Natural killer cell (primary cell): ENCODE measurements at regions of chr3 and their contacts with region 1.

Region 1: GRCh38 chr3:101849721-101850245 is 469 bp downstream of the NFKBIZ start:
- DNase-seq: peak; percentile 49 to 74
- ATAC-seq: peak; percentile 17 to 23 (median 19)
- H3K4me3 ChIP-seq: peak overlapping the region; percentile 82
- H3K4me3 Mint-ChIP-seq: peak overlapping the region; percentile 94
- H3K27ac ChIP-seq: peak overlapping the region; percentile 82
- H3K27ac Mint-ChIP-seq: peak overlapping the region; percentile 98 to 99
- H3K4me1 ChIP-seq: peaks cover 9% of the 10 kb centered on the region
- H3K4me1 Mint-ChIP-seq: peaks cover 38 to 45% of the 10 kb centered on the region in 2 donors
- H3K27me3 ChIP-seq: no peaks in the 10 kb centered on the region
- H3K27me3 Mint-ChIP-seq: no peaks in the 10 kb centered on the region
- CTCF ChIP-seq: no peak

Region 2: DNA sequence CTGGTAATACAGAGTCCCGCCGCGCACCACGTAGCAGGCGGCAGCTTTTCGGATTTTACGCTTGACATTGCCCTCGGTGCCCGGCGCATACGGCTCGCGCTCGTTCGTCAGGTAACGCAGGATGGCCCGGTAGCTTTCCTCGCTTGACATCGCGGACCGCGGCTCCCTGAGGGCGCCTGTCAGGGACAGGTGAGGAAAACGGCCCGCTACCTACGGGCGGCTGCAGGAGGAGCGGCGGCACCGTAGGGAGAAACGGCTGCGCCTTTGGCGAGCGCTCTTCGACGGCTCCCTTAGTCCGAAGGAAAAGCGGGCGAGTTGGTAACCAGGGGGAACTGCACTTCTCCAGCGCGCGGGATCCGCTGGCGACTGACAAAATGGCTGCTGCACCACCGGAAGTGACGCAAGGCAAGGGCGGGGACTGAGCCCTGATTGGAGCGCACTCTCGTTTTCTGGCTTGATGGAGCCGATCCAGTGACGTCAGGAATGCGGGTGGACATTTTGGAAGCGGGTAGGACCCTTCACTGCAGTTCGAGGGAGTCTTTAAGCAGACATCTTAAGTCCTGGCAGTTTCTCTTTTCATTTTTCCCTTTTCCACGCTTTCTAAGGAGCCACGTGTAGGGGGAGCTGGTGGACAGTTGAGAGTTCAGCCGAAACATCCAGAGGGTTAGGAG is 172.9 kb before region 1 on chr3 and contains the start of gene ZBTB11:
- intact Hi-C with region 1: loop called (anchors 5 kb)
- DNase-seq: peak; percentile 100
- ATAC-seq: peak; percentile 67 to 81 (median 71)
- H3K4me3 ChIP-seq: peak within 1 kb of the TSS; percentile 92
- H3K4me3 Mint-ChIP-seq: peak within 1 kb of the TSS; percentile 97
- H3K27ac ChIP-seq: peak within 1 kb of the TSS; percentile 98
- H3K27ac Mint-ChIP-seq: peak within 1 kb of the TSS; percentile 96 to 98
- H3K4me1 ChIP-seq: peaks cover 20% of the 10 kb centered on the region
- H3K4me1 Mint-ChIP-seq: peaks cover 45 to 52% of the 10 kb centered on the region in 2 donors
- H3K27me3 ChIP-seq: no peaks in the 10 kb centered on the region
- H3K27me3 Mint-ChIP-seq: no peaks in the 10 kb centered on the region
- CTCF ChIP-seq: no peak
- total RNA-seq, gene ZBTB11: 72.0 to 90.9 (median 83.5) TPM

Region 3: GRCh38 chr3:101724329-101725193 is 125.2 kb before region 1 on chr3 and contains the start of gene CEP97:
- intact Hi-C with region 1: loop called (anchors 1 kb)
- DNase-seq: peak; percentile 79 to 91
- ATAC-seq: peak; percentile 96 to 100 (median 97)
- H3K4me3 ChIP-seq: peak within 1 kb of the TSS; percentile 82
- H3K4me3 Mint-ChIP-seq: peak within 1 kb of the TSS; percentile 98
- H3K27ac ChIP-seq: peak within 1 kb of the TSS; percentile 54
- H3K27ac Mint-ChIP-seq: peak within 1 kb of the TSS; percentile 90 to 95
- H3K4me1 ChIP-seq: peaks cover 12% of the 10 kb centered on the region
- H3K4me1 Mint-ChIP-seq: peaks cover 17 to 25% of the 10 kb centered on the region in 2 donors
- H3K27me3 ChIP-seq: no peaks in the 10 kb centered on the region
- H3K27me3 Mint-ChIP-seq: no peaks in the 10 kb centered on the region
- CTCF ChIP-seq: no peak
- total RNA-seq, gene CEP97: 8.5 to 11.0 (median 9.4) TPM

Region 4: GRCh38 chr3:101809178-101810021 is 40.4 kb before region 1 on chr3:
- intact Hi-C with region 1: loop called (anchors 5 kb)
- DNase-seq: peak in 1 of 2 donors; percentile 81
- ATAC-seq: peak; percentile 62 to 80 (median 74)
- H3K4me3 ChIP-seq: no peak overlapping the region
- H3K4me3 Mint-ChIP-seq: no peak overlapping the region
- H3K27ac ChIP-seq: no peak overlapping the region
- H3K27ac Mint-ChIP-seq: peak overlapping the region; percentile 29 to 45
- H3K4me1 ChIP-seq: no peaks in the 10 kb centered on the region
- H3K4me1 Mint-ChIP-seq: peaks cover 8% of the 10 kb centered on the region in 2 donors
- H3K27me3 ChIP-seq: no peaks in the 10 kb centered on the region
- H3K27me3 Mint-ChIP-seq: no peaks in the 10 kb centered on the region
- CTCF ChIP-seq: peak; percentile 74

Region 5: DNA sequence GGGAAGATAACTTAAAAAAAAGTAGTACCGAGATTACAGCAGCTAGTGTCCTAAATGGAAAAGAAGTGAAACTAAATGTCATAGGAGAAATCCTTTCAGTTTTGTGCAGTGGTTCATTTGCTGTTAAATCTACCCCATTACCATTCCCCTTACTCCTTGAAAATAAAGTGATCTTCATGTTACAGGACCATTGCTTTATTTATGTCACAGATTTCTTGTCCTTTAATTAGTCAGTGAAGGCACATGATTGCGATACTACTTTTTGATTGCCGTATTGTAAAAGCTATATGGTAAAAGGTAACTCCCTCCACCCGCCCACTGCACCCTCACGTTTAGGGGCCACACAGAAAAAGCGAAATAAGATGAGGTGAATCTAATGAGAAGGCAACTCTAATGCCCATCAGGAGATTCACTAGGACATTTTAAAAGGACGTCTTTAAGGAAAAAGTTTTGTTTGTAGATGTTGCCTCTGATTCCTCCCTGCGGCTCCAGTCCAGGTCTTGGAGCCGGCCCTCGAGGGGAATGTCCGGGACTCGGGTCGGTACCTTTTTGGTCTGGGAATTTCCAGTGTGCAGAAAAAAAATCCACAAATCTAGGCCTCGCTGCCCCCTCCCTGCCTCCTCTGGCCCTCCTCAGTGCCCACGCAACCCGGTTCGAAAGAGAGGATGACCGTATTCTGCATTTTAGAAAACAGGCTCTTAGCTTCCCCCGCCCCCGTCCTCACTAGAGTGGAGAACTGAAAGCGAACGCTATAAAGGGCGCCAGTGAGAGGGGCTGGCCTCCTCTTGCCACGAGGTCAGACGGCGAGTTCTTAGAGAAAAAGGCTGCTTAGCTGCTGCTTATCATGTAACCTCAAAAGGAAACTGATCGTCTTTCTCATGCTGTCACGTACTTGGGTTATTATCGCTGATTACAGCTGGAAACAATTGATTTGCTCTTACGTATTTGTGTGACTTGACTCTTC is 22.3 kb before region 1 on chr3:
- intact Hi-C with region 1: loop called (anchors 1 kb)
- DNase-seq: peak; percentile 75 to 90
- ATAC-seq: peak; percentile 80 to 92 (median 86)
- H3K4me3 ChIP-seq: peak overlapping the region; percentile 56
- H3K4me3 Mint-ChIP-seq: peak overlapping the region; percentile 92
- H3K27ac ChIP-seq: peak overlapping the region; percentile 89
- H3K27ac Mint-ChIP-seq: peak overlapping the region; percentile 89 to 96
- H3K4me1 ChIP-seq: peaks cover 26% of the 10 kb centered on the region
- H3K4me1 Mint-ChIP-seq: peaks cover 35 to 38% of the 10 kb centered on the region in 2 donors
- H3K27me3 ChIP-seq: no peaks in the 10 kb centered on the region
- H3K27me3 Mint-ChIP-seq: no peaks in the 10 kb centered on the region
- CTCF ChIP-seq: no peak

Region 6: DNA sequence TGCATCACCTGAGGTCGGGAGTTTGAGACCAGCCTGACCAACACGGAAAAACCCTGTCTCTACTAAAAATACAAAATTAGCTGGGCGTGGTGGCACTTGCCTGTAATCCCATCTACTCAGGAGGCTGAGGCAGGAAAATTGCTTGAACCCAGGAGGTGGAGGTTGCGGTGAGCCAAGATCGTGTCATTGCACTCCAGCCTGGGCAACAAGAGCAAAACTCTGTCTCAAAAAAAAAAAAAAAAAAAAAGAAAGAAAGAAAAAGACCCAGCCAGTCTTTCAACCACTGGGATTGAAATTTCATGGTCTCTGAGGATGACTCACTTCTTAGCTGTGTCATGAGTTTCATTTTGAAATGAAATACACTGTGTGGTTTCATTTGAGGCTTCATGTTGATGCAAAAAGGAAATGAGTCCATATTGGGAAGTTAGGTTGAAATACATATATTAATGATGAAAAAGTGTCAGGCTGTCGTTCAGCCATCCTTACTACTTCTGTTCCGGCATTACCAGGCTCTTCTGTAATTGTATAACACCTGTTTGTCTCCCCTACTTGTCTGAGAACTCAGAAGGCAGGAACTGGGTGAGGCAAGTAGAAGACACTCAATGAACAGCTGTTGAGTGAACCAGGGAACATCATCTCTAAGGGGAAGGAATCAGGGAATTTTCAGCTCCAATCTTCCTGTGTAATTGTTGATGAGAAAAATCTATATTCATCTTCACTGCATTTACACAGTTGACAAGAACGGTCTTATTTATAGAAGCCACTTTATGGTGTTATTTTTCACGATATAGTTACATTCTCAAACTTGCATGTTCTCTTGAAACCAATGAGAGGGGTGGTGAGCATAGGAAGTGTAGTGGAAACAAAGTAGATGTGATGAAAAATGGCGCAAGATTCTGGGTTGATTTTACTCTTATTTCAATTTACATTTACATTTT is 86.9 kb after region 1 on chr3:
- intact Hi-C with region 1: loop called (anchors 5 kb)
- DNase-seq: peak in 1 of 2 donors; percentile 76
- ATAC-seq: peak; percentile 86 to 90 (median 88)
- H3K4me3 ChIP-seq: no peak overlapping the region
- H3K4me3 Mint-ChIP-seq: peak overlapping the region; percentile 4
- H3K27ac ChIP-seq: peak overlapping the region; percentile 28
- H3K27ac Mint-ChIP-seq: peak overlapping the region; percentile 57 to 67
- H3K4me1 ChIP-seq: peaks cover 6% of the 10 kb centered on the region
- H3K4me1 Mint-ChIP-seq: peaks cover 13 to 14% of the 10 kb centered on the region in 2 donors
- H3K27me3 ChIP-seq: no peaks in the 10 kb centered on the region
- H3K27me3 Mint-ChIP-seq: no peaks in the 10 kb centered on the region
- CTCF ChIP-seq: no peak

Region 7: GRCh38 chr3:102129760-102130608 is 280.2 kb after region 1 on chr3:
- intact Hi-C with region 1: no loop called
- DNase-seq: no peak
- ATAC-seq: no peak
- H3K4me3 ChIP-seq: no peak overlapping the region
- H3K4me3 Mint-ChIP-seq: no peak overlapping the region
- H3K27ac ChIP-seq: no peak overlapping the region
- H3K27ac Mint-ChIP-seq: no peak overlapping the region
- H3K4me1 ChIP-seq: no peaks in the 10 kb centered on the region
- H3K4me1 Mint-ChIP-seq: no peaks in the 10 kb centered on the region
- H3K27me3 ChIP-seq: no peaks in the 10 kb centered on the region
- H3K27me3 Mint-ChIP-seq: no peaks in the 10 kb centered on the region
- CTCF ChIP-seq: no peak